ENCODE measurements at regions of chr7 and their contacts with region 1.

Region 1: DNA sequence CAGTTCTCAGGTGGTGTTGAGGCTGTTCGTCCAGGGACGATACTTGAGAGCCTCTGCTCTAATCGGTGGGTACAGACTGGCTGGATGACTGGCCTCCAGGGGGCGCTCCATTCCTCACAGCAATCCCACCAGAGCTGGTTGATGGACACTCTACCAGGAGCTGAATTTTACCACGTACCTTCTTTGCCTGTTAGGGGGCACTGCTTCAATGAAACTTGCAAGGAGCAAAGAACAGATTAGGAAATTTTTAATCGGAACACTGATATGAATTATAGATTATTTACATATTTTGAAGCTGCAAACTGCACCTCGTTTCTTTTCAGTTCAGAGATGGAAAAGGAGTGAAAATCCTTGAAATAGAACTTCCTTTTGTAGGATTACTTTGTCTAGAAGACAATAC is 44.9 kb downstream of the KBTBD2 start:
- DNase-seq: peak; percentile 97
- ATAC-seq: peak; percentile 100
- H3K4me3 Mint-ChIP-seq: no peak overlapping the region
- H3K27ac Mint-ChIP-seq: peak overlapping the region; percentile 4
- H3K4me1 Mint-ChIP-seq: peaks cover 10% of the 10 kb centered on the region
- H3K27me3 Mint-ChIP-seq: peaks cover 19% of the 10 kb centered on the region
- CTCF ChIP-seq: peak; percentile 92

Region 2: GRCh38 chr7:32670110-32671025 is 176.3 kb before region 1 on chr7:
- CTCF ChIA-PET with region 1: no interaction called
- POLR2A ChIA-PET with region 1: no interaction called
- intact Hi-C with region 1: no loop called
- DNase-seq: no peak
- ATAC-seq: no peak
- H3K4me3 Mint-ChIP-seq: no peak overlapping the region
- H3K27ac Mint-ChIP-seq: no peak overlapping the region
- H3K4me1 Mint-ChIP-seq: no peaks in the 10 kb centered on the region
- H3K27me3 Mint-ChIP-seq: no peaks in the 10 kb centered on the region
- CTCF ChIP-seq: no peak

Region 3: DNA sequence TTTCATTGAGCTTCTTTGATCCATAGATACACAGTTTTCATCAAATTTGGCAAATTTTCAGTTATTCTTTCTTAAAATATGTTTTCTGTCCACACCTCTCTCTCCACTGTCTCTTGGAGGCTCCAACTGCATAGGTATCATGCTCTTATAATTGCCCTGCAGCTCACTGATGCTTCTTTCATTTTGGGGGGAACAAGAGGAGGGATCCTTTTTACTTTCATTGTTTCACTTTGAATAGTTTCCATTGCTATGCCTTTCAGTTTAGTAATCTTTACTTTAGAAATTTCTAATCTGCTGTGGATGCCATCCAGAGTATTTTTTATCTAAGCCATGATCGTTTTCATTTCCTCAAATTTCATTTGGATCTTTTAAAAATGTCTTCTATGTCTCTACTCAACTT is 11.9 kb after region 1 on chr7:
- CTCF ChIA-PET with region 1: interaction called, 41 read pairs
- POLR2A ChIA-PET with region 1: no interaction called
- intact Hi-C with region 1: no loop called
- DNase-seq: no peak
- ATAC-seq: peak; percentile 55
- H3K4me3 Mint-ChIP-seq: no peak overlapping the region
- H3K27ac Mint-ChIP-seq: no peak overlapping the region
- H3K4me1 Mint-ChIP-seq: peaks cover 13% of the 10 kb centered on the region
- H3K27me3 Mint-ChIP-seq: peaks cover 16% of the 10 kb centered on the region
- CTCF ChIP-seq: no peak

Region 4: GRCh38 chr7:32881074-32882017 is 34.6 kb after region 1 on chr7:
- CTCF ChIA-PET with region 1: interaction called, 47 read pairs
- POLR2A ChIA-PET with region 1: no interaction called
- intact Hi-C with region 1: no loop called
- DNase-seq: no peak
- ATAC-seq: no peak
- H3K4me3 Mint-ChIP-seq: no peak overlapping the region
- H3K27ac Mint-ChIP-seq: peak overlapping the region; percentile 51
- H3K4me1 Mint-ChIP-seq: peaks cover 51% of the 10 kb centered on the region
- H3K27me3 Mint-ChIP-seq: no peaks in the 10 kb centered on the region
- CTCF ChIP-seq: no peak

Region 5: DNA sequence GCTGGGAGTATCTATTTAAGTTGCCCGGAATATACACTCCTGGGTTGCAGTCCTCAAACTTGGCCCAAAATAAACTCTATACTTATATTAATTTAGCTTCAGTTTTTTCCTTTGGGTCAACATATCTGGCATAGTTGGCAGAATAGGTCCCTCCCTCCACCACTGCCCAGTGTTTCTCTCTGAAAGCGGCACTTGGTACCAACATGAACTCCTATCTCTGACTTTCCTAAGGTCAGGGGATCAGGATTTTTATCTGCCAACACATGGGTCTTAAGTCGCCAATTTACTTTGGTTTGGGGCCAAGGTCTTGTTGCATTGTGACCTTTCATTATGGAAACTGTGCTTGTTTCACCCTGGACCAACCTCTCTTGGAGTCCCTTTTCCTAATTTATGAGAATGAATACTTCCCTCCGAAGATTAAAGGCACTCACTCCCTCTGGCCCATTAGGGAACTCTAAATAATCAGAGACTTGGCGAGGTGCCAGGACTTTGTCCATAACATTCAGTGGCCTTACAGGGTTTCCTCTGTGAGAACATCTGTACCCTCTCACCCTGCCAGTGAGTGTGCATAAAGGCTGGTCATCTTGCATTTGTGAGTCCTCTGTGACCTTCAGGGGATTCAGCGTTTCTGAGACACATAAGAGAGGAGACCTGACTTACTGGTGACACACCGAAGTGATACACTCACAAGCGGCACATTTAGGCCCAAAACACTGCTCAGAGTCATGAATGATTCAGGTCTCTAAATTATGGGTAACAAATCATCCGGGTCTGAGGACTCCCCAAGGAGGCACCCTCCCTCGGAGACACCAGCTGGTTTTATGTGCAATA is 90.9 kb after region 1 on chr7:
- CTCF ChIA-PET with region 1: interaction called, 95 read pairs
- POLR2A ChIA-PET with region 1: no interaction called
- intact Hi-C with region 1: loop called (anchors 2 kb)
- DNase-seq: no peak
- ATAC-seq: no peak
- H3K4me3 Mint-ChIP-seq: no peak overlapping the region
- H3K27ac Mint-ChIP-seq: no peak overlapping the region
- H3K4me1 Mint-ChIP-seq: peaks cover 15% of the 10 kb centered on the region
- H3K27me3 Mint-ChIP-seq: peaks cover 6% of the 10 kb centered on the region
- CTCF ChIP-seq: no peak

Region 6: GRCh38 chr7:33040803-33041516 is 194.3 kb after region 1 on chr7:
- CTCF ChIA-PET with region 1: interaction called, 15 read pairs
- POLR2A ChIA-PET with region 1: no interaction called
- intact Hi-C with region 1: no loop called
- DNase-seq: peak; percentile 82
- ATAC-seq: peak; percentile 99
- H3K4me3 Mint-ChIP-seq: peak overlapping the region; percentile 64
- H3K27ac Mint-ChIP-seq: peak overlapping the region; percentile 79
- H3K4me1 Mint-ChIP-seq: peaks cover 52% of the 10 kb centered on the region
- H3K27me3 Mint-ChIP-seq: no peaks in the 10 kb centered on the region
- CTCF ChIP-seq: no peak

Region 7: GRCh38 chr7:33109005-33109757 is 262.5 kb after region 1 on chr7 and contains the start of gene RP9:
- CTCF ChIA-PET with region 1: interaction called, 59 read pairs
- POLR2A ChIA-PET with region 1: no interaction called
- intact Hi-C with region 1: loop called (anchors 5 kb)
- DNase-seq: peak; percentile 78
- ATAC-seq: peak; percentile 93
- H3K4me3 Mint-ChIP-seq: peak within 1 kb of the TSS; percentile 88
- H3K27ac Mint-ChIP-seq: peak within 1 kb of the TSS; percentile 70
- H3K4me1 Mint-ChIP-seq: peaks cover 30% of the 10 kb centered on the region
- H3K27me3 Mint-ChIP-seq: peaks cover 7% of the 10 kb centered on the region
- CTCF ChIP-seq: peak; percentile 52
- total RNA-seq, gene RP9: 14.2 to 15.4 TPM

Region 8: DNA sequence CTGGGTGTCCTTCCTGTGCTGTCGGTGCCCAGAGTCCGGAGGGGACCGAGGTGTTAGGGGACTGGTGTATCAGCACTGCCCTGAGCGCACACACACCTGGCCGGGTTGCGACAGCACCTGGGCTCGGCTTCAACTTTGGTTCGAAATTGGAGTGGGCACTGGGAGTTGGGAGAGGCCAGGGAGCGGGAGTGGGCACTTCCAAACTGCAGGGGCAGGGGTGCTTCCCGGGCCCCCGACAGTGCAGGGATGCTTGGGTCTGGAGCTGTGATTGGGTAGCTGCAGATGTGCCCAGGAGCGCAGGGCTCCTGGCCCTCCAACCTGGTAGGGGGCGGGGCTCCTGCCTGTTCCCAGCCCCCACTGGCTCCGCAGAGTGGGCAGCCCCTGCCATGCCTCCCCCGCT is 290.4 kb after region 1 on chr7:
- CTCF ChIA-PET with region 1: no interaction called
- POLR2A ChIA-PET with region 1: no interaction called
- intact Hi-C with region 1: no loop called
- DNase-seq: no peak
- ATAC-seq: no peak
- H3K4me3 Mint-ChIP-seq: no peak overlapping the region
- H3K27ac Mint-ChIP-seq: no peak overlapping the region
- H3K4me1 Mint-ChIP-seq: peaks cover 3% of the 10 kb centered on the region
- H3K27me3 Mint-ChIP-seq: no peaks in the 10 kb centered on the region
- CTCF ChIP-seq: no peak